Endothelial cell of umbilical vein (primary cell): ENCODE measurements at regions of chr1 and their contacts with region 1.

Region 1: DNA sequence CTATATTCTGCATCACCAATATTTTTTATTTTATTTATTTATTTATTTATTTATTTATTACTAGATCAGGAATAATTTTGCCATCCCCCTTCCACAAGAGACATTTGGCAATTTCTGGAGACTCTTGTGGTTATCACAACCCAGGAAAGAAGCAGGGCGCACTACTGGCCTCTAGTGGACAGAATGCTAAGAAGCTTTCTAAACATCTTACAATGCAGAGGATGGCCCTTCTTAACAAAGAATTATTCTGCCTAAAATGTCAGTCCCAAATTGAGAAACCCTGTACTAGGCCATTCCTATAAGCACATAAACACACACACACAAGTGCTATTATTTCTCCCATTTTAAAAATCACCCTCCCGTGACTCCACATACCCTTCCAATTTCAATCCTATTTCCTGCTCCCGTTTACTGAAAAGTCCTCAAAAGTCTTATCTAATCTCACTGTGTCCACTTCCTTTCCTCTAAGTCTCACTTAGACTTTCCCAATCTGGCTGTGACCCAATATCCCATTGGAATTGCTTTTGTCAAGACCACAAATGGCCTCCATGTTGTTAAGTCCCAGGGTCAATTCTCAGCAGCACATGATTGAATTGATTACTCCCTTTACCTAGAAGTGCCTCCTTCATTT is 43.7 kb upstream of the RNF11 start:
- DNase-seq: peak; percentile 73
- H3K4me3 ChIP-seq: no peak overlapping the region
- H3K27ac ChIP-seq: no peak overlapping the region
- H3K4me1 ChIP-seq: peaks cover 3% of the 10 kb centered on the region
- H3K27me3 ChIP-seq: peaks cover 0 to 2% of the 10 kb centered on the region in 2 experiments
- CTCF ChIP-seq: peak; percentile 68 to 79
- POLR2A ChIP-seq: no peak

Region 2: GRCh38 chr1:50368179-50369012 is 823.9 kb before region 1 on chr1:
- CTCF ChIA-PET with region 1: interaction called, 5 read pairs
- POLR2A ChIA-PET with region 1: no interaction called
- dilution Hi-C with region 1: no loop called
- intact Hi-C with region 1: loop called (anchors 2 kb)
- DNase-seq: peak; percentile 26
- H3K4me3 ChIP-seq: no peak overlapping the region
- H3K27ac ChIP-seq: no peak overlapping the region
- H3K4me1 ChIP-seq: no peaks in the 10 kb centered on the region
- H3K27me3 ChIP-seq: peaks cover 11 to 15% of the 10 kb centered on the region in 2 experiments
- CTCF ChIP-seq: peak; percentile 51 to 62
- POLR2A ChIP-seq: no peak

Region 3: GRCh38 chr1:50774759-50775351 is 417.5 kb before region 1 on chr1:
- CTCF ChIA-PET with region 1: interaction called, 123 read pairs
- POLR2A ChIA-PET with region 1: no interaction called
- dilution Hi-C with region 1: no loop called
- intact Hi-C with region 1: loop called (anchors 1 kb)
- DNase-seq: peak; percentile 67
- H3K4me3 ChIP-seq: no peak overlapping the region
- H3K27ac ChIP-seq: no peak overlapping the region
- H3K4me1 ChIP-seq: no peaks in the 10 kb centered on the region
- H3K27me3 ChIP-seq: no peaks in the 10 kb centered on the region
- CTCF ChIP-seq: peak; percentile 38 to 50
- POLR2A ChIP-seq: no peak

Region 4: GRCh38 chr1:50929376-50929958 is 262.9 kb before region 1 on chr1:
- CTCF ChIA-PET with region 1: interaction called, 100 read pairs
- POLR2A ChIA-PET with region 1: no interaction called
- dilution Hi-C with region 1: no loop called
- intact Hi-C with region 1: loop called (anchors 1 kb)
- DNase-seq: peak; percentile 52
- H3K4me3 ChIP-seq: no peak overlapping the region
- H3K27ac ChIP-seq: no peak overlapping the region
- H3K4me1 ChIP-seq: no peaks in the 10 kb centered on the region
- H3K27me3 ChIP-seq: no peaks in the 10 kb centered on the region
- CTCF ChIP-seq: peak; percentile 23 to 36
- POLR2A ChIP-seq: no peak

Region 5: DNA sequence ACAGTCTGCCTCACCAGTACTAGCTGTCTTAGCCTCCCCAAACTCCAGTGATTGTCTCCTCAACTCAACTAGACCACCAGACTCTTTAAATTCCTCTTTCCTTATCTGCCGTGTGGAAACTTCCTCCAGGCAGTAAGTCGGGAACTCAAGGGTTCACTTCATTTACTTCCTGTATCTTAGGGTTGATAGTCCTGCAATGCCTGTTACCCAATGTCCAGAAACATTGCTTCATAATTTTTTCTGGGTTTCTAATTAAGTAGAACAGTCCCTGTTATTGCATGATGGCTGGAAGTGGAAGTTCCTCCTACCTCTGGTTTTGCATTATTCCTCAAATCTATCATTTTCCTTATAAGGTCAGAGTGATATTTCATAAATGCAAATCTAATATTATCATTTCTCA is 17.1 kb before region 1 on chr1:
- CTCF ChIA-PET with region 1: interaction called, 18 read pairs
- POLR2A ChIA-PET with region 1: no interaction called
- dilution Hi-C with region 1: no loop called
- intact Hi-C with region 1: no loop called
- DNase-seq: no peak
- H3K4me3 ChIP-seq: no peak overlapping the region
- H3K27ac ChIP-seq: no peak overlapping the region
- H3K4me1 ChIP-seq: no peaks in the 10 kb centered on the region
- H3K27me3 ChIP-seq: peaks cover 4 to 11% of the 10 kb centered on the region in 2 experiments
- CTCF ChIP-seq: no peak
- POLR2A ChIP-seq: no peak

Region 6: DNA sequence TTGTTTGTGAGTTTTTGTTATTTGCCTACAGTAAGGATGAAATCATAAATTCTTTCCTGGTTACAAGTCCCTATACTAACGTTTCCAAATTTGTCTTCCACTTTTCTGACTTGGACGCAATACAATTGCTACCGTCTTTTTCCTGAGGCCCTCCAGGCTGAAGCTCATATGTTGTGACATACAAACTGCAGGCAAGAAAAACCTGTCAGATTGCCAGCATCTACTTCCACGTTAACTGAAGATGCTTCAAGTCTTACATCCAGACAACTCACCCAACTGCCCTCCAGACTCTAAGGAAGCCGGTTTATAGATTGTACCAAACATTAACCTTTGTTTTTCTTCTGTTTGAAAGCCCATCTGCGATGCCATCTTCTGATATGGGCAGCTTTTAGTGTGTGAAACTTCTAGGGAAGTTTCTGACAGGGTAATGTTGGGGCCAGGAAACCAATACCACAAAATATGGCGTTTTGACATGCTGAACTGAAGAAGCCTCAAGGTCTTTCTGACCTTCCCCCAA is 22.3 kb after region 1 on chr1:
- CTCF ChIA-PET with region 1: interaction called, 14 read pairs
- POLR2A ChIA-PET with region 1: no interaction called
- dilution Hi-C with region 1: no loop called
- intact Hi-C with region 1: no loop called
- DNase-seq: no peak
- H3K4me3 ChIP-seq: no peak overlapping the region
- H3K27ac ChIP-seq: no peak overlapping the region
- H3K4me1 ChIP-seq: no peaks in the 10 kb centered on the region
- H3K27me3 ChIP-seq: no peaks in the 10 kb centered on the region
- CTCF ChIP-seq: no peak
- POLR2A ChIP-seq: no peak

Region 7: DNA sequence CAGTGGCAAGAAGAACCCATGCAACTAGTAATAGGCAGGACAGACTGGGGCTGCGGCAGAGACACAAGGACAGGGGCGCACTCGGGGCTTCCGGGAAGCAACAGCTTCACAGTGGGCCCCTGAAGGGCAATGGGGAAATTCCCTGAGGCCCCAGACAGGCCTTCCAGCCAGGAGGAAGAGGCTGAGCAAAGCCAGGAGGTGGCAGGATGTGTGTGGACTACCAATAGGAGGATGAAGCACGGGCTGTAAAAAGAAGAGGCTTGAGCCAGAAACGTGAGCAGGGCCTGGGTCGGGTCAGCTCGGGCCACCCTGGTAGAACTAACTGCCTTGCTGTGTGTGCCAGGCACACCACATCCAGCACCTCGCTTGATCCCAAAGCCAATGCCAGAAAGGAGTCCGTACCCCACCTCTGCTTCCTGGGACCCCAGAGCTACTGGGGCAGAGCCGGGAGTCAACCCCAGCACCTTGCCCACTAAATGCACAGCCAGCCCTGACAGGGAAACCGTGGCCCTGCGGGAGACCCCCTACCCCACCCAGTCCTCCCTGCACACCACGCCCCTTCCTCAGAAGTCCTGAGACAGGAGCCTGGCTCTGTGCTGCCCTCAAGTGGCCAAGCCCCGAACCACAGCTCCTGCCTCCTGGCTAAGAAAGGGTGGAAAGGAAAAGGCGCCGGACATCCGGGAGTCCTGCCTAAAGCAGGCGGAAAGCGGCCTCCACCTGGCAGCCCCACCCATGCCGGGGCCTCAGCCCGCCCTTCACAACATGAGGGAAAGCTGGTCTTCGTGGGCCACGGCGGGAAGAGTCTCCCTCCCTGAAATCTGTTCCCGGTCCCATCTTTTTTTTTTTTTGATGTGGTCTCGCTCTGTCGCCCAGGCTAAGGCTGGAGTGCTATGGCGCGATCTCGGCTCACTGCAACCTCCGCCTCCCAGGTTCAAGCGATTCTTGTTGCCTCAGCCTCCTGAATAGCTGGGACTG is 104.3 kb after region 1 on chr1:
- CTCF ChIA-PET with region 1: interaction called, 63 read pairs
- POLR2A ChIA-PET with region 1: no interaction called
- dilution Hi-C with region 1: no loop called
- intact Hi-C with region 1: loop called (anchors 1 kb)
- DNase-seq: peak; percentile 80
- H3K4me3 ChIP-seq: peak overlapping the region in 2 of 3 experiments; percentile 2 to 34
- H3K27ac ChIP-seq: peak overlapping the region; percentile 39
- H3K4me1 ChIP-seq: peaks cover 9% of the 10 kb centered on the region
- H3K27me3 ChIP-seq: no peaks in the 10 kb centered on the region
- CTCF ChIP-seq: peak; percentile 93 to 96
- POLR2A ChIP-seq: peak; percentile 32